ENCODE measurements at regions of chr7 and their contacts with region 1.

Region 1: GRCh38 chr7:83908526-83908925 is 259.6 kb upstream of the SEMA3E start:
- DNase-seq: no peak
- ATAC-seq: no peak
- H3K4me3 ChIP-seq: no peak overlapping the region
- H3K27ac ChIP-seq: no peak overlapping the region
- H3K4me1 ChIP-seq: no peaks in the 10 kb centered on the region
- H3K27me3 ChIP-seq: no peaks in the 10 kb centered on the region
- CTCF ChIP-seq: no peak

Region 2: GRCh38 chr7:83439026-83439425 is 469.5 kb before region 1 on chr7:
- intact Hi-C with region 1: loop called in 1 of 10 experiments (anchors 10 kb)
- DNase-seq: no peak
- ATAC-seq: no peak
- H3K4me3 ChIP-seq: no peak overlapping the region
- H3K27ac ChIP-seq: no peak overlapping the region
- H3K4me1 ChIP-seq: no peaks in the 10 kb centered on the region
- H3K27me3 ChIP-seq: no peaks in the 10 kb centered on the region
- CTCF ChIP-seq: no peak